ENCODE measurements at regions of chr6 and their contacts with region 1.

Region 1: DNA sequence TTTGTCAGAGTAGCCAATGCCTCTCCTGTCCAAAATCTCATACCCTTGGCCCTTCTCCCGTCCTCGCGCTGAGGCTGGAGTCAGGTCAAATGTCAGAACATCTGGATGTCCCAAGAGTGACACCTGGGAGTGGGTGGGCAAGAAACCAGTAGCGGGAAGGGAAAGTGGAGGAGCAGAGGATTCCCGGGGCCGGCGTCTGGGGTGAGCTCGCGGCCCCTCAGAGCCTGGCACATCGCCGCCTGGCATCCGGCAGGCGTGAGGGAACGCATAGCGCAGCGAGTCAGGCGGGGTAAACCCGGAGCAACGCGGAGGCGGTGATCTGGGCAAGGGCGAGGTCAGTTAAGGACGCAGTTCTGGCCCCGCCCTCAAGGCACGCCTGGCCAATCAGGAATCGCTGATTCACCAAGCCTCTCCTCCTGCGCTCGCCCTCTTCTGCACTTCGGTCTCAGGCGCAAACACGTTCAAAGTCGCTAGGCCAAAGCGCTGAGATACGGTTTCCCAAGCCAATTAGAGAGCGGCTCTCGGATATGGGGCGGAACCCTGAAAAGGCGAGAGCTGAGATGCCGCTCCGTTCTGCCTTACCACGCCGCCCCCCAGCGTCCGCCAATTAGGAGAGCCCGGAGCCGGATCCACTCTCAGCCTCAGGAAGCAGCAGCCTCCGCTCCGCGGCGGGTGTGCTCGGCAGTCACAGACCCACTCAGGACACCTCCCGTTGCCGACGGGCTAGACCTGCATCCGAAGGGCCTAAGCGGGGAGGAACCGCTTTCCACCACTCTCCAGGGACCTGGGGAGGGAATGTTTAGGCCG is 22.5 kb downstream of the VPS52 start:
- DNase-seq: peak; percentile 86 to 99 (median 98)
- H3K4me3 ChIP-seq: peak overlapping the region; percentile 46 to 100 (median 72)
- H3K27ac ChIP-seq: peak overlapping the region; percentile 67 to 96 (median 90)
- H3K27me3 ChIP-seq: no peaks in the 10 kb centered on the region
- CTCF ChIP-seq: peak in 53 of 56 donors; percentile 34 to 76 (median 53)

Region 2: DNA sequence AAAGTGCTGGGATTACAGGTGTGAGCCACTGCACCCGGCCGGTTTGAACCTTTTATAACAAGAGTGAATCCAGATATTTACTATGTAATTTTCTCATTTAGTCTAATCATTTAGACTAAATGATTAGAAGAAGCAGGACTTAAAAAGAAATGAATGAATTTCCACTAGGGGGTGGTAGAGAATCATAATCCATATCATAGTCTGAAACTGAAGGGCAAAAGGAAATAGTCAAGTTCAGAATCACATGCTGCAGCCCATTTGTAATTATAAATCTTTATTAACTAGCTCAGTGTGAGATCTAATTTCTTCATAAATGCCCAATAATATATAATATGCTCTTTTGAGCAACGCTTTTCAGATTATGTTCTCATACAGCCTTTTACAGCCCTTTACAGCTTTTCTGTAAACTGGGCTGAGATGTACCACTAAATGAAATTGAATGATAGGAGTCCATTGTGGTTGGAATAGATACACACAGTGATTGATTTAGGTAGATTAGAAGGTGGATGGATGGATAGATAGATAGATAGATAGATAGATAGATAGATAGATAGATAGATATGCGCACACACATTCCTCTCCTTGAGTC is 363.3 kb before region 1 on chr6:
- intact Hi-C with region 1: loop called in 1 of 2 experiments (anchors 5 kb)
- DNase-seq: no peak
- H3K4me3 ChIP-seq: peak overlapping the region in 1 of 59 donors; percentile 1
- H3K27ac ChIP-seq: peak overlapping the region in 5 of 59 donors; percentile 10 to 63 (median 47)
- H3K27me3 ChIP-seq: no peaks in the 10 kb centered on the region
- CTCF ChIP-seq: peak; percentile 61 to 90 (median 79)

Region 3: DNA sequence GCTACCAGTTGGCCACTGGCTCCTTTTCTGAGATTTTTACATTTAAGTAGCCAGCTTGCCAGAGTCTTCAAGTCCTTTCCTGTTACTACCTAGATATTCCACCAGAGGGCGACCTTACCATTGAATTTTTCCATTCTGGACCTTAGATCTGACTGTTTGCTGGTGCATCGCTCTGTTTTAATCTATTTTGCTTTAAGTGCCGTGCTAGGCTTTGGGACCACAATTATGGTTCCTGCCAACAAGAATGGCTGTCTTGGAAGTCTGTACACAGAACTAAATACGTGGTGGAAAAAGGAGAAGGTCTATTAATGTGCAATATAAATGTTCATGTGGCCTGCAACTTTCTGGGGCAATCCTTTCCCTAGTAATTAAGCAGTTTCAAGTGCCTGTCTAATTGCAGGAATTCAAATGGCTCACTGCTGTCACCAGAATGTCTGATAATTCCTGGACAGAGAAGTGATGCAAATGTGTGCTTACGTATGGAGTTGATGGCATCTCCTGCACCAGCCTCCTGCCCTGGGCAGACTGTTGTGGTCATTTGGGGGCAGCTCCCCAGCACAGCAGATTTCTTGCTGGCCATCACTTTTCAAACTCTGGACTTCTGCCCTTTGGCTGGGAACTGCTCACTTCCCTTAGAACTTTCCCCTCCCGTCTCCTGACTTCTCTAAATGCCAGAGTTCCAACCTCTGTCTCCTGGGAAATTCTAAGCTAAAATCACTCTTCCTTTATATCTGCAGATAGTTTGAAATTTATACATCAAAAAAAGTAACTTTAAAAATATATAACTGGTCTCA is 234.1 kb before region 1 on chr6:
- intact Hi-C with region 1: loop called (anchors 2 to 5 kb)
- DNase-seq: peak in 2 of 10 donors; percentile 44 to 63
- H3K4me3 ChIP-seq: no peak overlapping the region
- H3K27ac ChIP-seq: peak overlapping the region in 1 of 59 donors; percentile 3
- H3K27me3 ChIP-seq: peaks cover 0 to 28% (median 3%) of the 10 kb centered on the region in 45 donors
- CTCF ChIP-seq: peak; percentile 77 to 98 (median 90)

Region 4: DNA sequence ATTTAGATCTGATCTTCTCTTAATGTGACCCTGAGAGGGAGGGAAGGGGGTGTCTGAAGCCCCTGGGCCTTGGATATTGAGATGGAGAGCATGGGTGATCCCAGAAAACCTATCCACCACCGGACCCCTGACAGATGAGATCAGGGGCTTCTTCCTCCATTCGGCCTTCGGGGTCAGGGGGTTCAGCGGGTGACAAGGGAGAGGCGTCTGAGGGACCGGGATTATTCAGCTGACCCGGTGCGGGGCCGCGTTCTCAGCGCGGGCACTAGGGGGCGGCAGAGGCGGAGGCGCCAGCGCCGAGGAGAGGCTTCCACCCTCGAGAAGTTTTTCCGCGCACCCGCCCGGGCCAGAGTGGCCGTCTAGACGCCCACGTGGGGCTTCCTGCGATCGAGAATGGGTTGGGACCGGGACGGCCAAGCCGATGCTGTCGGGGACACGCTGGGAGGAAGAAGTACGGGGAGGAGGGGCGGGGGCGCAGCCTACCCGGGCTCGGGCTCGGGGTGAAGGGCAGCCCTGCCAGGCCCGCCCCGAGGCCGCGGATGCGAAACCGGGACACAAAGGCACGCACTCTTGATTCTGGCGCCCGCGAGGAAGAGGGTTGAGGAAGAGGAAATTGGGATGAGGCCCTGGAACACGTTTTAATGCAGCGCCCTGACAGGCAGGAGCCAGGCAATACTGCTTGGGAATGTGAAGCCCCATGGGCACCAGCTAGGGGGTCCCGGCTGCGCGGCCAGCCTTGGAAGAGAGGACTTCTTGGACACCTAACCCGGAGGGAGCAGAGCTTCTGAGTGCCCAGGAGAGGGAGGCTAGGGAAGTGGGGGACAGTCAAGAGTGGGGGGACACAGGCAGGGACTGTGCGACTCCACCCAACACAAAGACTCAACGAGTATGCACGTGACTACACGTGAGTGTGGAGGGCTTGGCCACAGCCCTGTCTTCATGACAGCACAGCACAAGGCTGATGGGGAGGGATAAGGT is 87.5 kb before region 1 on chr6:
- intact Hi-C with region 1: loop called (anchors 1 to 5 kb)
- DNase-seq: peak; percentile 56 to 88 (median 72)
- H3K4me3 ChIP-seq: peak overlapping the region; percentile 35 to 69 (median 54)
- H3K27ac ChIP-seq: peak overlapping the region in 13 of 59 donors; percentile 0 to 62 (median 24)
- H3K27me3 ChIP-seq: no peaks in the 10 kb centered on the region
- CTCF ChIP-seq: peak; percentile 69 to 97 (median 91)

Region 5: DNA sequence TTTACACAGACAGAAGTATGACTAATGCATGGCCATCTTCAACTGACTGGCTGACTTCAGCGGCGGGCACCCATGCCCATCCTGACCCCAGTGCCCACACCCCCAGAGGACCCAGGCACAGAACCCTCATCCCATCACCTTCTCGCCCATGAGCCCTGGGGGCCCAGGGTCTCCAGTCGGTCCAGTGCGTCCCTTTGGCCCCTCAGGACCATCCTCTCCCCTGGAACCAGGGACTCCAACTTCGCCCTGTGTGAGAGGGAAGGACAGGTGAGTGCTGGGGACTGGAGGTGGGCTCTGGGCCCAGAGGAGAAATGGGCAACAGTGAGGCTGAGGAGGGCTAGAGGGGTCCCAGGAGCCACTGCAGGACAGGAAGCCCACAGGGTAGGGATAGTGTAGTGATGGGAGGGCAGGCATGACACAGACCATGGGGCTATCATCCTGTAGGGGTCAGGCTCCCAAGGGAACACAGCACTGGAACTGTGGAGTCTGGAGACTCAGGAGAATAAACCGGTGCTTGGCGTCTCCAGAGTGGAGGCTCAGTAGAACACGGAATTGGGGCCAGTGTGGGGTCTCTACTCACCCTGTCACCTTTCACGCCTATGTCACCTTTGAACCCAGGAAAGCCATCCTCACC is 73.6 kb before region 1 on chr6:
- intact Hi-C with region 1: no loop called
- DNase-seq: no peak
- H3K4me3 ChIP-seq: no peak overlapping the region
- H3K27ac ChIP-seq: no peak overlapping the region
- H3K27me3 ChIP-seq: no peaks in the 10 kb centered on the region
- CTCF ChIP-seq: no peak

Region 6: DNA sequence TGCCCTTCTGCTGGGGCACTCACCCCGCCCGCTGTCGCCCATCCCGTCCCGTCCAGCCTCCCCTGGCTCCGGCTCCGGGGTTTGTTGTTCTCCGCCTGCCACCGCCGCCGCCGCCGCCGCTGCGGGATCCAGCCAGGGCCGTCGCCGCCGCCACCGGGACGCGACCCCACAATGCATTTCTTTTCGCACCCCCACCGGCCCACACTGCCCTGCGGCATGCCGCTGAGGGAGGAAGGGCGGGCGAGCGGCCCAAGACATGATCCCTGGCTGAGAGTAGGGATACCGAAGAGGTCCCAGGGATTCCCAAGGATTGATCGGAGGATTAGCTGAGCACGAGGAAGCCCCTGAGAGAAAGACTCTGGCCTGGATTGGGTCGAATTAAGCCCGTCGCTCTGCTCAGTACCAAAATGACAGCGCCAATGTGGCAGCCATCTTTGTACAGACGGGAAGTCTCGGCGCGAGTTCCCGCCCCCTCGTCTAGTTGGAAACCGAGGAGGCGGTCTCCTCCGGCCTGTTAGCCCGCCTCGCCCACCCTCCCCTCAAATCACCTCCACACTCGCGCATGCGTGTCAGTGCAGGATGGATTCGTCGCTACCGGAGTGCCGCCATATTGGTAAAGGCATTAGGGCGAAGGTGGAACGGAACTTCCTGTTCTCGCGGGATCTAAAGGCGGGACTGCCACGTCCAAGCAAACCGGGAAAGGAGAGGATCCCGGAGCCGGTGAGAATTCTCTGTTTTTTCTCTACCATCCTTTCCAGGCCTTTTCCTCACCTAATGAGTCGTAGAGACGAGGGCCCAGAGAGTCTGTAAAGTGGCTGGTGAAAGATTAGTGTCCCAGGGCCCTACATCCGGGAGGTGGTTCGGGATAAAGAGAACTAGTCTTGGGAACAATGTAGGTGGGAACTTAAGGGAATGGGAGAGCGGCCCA is 48.6 kb before region 1 on chr6 and contains the starts of genes RXRB and SLC39A7:
- intact Hi-C with region 1: loop called (anchors 2 kb)
- DNase-seq: peak; percentile 95 to 99 (median 98)
- H3K4me3 ChIP-seq: peak within 1 kb of the TSS; percentile 66 to 99 (median 87)
- H3K27ac ChIP-seq: peak within 1 kb of the TSS; percentile 95 to 100 (median 99)
- H3K27me3 ChIP-seq: no peaks in the 10 kb centered on the region
- CTCF ChIP-seq: peak in 28 of 56 donors; percentile 5 to 61 (median 23)
- total RNA-seq, gene RXRB: 47.2 to 81.0 (median 62.9) TPM
- total RNA-seq, gene SLC39A7: 23.7 to 48.3 (median 35.6) TPM

Region 7: GRCh38 chr6:33579828-33580714 is 330.9 kb after region 1 on chr6 and contains the start of gene BAK1:
- intact Hi-C with region 1: no loop called
- DNase-seq: peak; percentile 79 to 97 (median 94)
- H3K4me3 ChIP-seq: peak within 1 kb of the TSS; percentile 65 to 97 (median 86)
- H3K27ac ChIP-seq: peak within 1 kb of the TSS; percentile 31 to 96 (median 86)
- H3K27me3 ChIP-seq: no peaks in the 10 kb centered on the region
- CTCF ChIP-seq: peak; percentile 28 to 81 (median 66)
- total RNA-seq, gene BAK1: 6.4 to 17.0 (median 10.8) TPM